Breast epithelium (tissue), 4 donors: ENCODE measurements at regions of chr15 and their contacts with region 1.

Region 1: DNA sequence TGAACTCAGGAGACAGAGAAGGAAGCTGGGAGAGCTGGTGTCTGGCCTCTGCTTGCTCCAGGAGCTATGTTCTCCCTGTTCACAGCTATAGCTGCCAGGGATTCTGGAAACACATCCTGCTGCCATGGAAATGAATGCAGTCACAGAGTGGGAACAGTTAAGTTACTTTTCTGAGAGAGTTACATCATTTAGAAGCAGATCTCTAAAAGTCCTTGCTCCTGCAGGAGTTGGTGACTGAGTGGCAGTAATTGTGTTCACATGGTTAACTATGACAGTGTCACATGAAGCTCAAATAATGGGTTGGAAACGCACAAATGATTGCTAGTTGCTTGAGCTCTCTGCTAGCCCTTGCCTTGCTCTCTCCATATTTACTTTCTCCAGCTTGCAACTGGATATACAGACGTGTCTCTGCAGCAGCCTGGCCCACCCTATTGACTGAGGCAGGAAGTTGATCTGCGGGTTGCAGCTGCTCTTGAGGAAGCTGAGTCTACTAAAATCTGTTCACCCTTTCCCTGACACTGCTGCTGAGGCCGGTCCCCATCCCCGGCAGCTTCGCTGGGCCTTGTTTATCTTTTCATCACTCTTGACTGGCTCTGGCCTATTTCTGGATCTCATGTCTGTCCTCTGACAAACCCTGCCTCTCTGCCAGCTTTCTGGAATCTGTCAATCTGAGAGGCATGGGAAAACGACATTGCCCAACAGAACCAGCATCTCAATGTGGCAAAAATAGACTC is 16.7 kb upstream of the ISLR start:
- DNase-seq: no peak
- H3K4me3 ChIP-seq: no peak overlapping the region
- H3K27ac ChIP-seq: peak overlapping the region in 1 of 2 donors; percentile 27
- H3K4me1 ChIP-seq: no peaks in the 10 kb centered on the region
- H3K27me3 ChIP-seq: no peaks in the 10 kb centered on the region
- CTCF ChIP-seq: no peak
- POLR2A ChIP-seq: no peak

Region 2: GRCh38 chr15:73633111-73633990 is 523.5 kb before region 1 on chr15 and contains the start of gene NPTN:
- intact Hi-C with region 1: no loop called
- DNase-seq: peak; percentile 97 to 99
- H3K4me3 ChIP-seq: peak within 1 kb of the TSS; percentile 96 to 99 (median 98)
- H3K27ac ChIP-seq: peak within 1 kb of the TSS; percentile 98 to 99
- H3K4me1 ChIP-seq: peaks cover 6 to 27% of the 10 kb centered on the region in 2 donors
- H3K27me3 ChIP-seq: no peaks in the 10 kb centered on the region
- CTCF ChIP-seq: peak in 1 of 3 donors; percentile 8
- POLR2A ChIP-seq: peak; percentile 61
- total RNA-seq, gene NPTN: 82.1 to 107 (median 104) TPM

Region 3: GRCh38 chr15:74184276-74185091 is 27.6 kb after region 1 on chr15:
- intact Hi-C with region 1: loop called (anchors 1 kb)
- DNase-seq: no peak
- H3K4me3 ChIP-seq: no peak overlapping the region
- H3K27ac ChIP-seq: no peak overlapping the region
- H3K4me1 ChIP-seq: peaks cover 8 to 10% of the 10 kb centered on the region in 2 donors
- H3K27me3 ChIP-seq: no peaks in the 10 kb centered on the region
- CTCF ChIP-seq: no peak
- POLR2A ChIP-seq: no peak